Caco-2 (cell line): ENCODE measurements at regions of chr13 and their contacts with region 1.

Region 1: GRCh38 chr13:26946684-26947343 is 186.2 kb upstream of the GPR12 start:
- DNase-seq: peak; percentile 32 to 69
- H3K4me3 ChIP-seq: no peak overlapping the region
- H3K4me3 Mint-ChIP-seq: no peak overlapping the region
- H3K27ac Mint-ChIP-seq: no peak overlapping the region
- H3K4me1 ChIP-seq: peaks cover 48% of the 10 kb centered on the region
- H3K4me1 Mint-ChIP-seq: peaks cover 34% of the 10 kb centered on the region
- H3K27me3 ChIP-seq: no peaks in the 10 kb centered on the region
- H3K27me3 Mint-ChIP-seq: no peaks in the 10 kb centered on the region
- CTCF ChIP-seq: peak; percentile 87 to 97

Region 2: DNA sequence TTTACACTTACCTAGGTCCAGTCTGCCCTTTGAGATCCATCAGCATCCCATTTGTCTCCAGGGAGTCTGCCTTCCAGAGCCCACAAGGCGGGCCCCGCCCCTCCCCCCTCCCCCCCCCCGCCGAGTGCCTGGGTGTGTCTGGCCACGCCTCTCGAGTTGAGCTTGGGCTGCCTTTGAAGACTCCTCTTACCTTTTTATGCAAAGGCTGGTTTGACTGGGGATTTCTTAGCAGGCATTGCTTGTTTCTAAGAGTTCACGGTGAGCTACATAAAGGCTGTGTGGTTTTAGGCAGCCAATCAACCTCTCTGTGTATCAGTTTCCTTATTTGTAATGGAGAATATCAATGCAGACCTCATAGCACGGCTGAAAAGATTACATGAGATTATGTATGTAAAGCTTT is 197.5 kb before region 1 on chr13:
- CTCF ChIA-PET with region 1: no interaction called
- POLR2A ChIA-PET with region 1: no interaction called
- intact Hi-C with region 1: no loop called
- DNase-seq: no peak
- H3K4me3 ChIP-seq: no peak overlapping the region
- H3K4me3 Mint-ChIP-seq: no peak overlapping the region
- H3K27ac Mint-ChIP-seq: no peak overlapping the region
- H3K4me1 ChIP-seq: no peaks in the 10 kb centered on the region
- H3K4me1 Mint-ChIP-seq: no peaks in the 10 kb centered on the region
- H3K27me3 ChIP-seq: no peaks in the 10 kb centered on the region; the same call in 1 of the 2 replicates
- H3K27me3 Mint-ChIP-seq: peaks cover 20% of the 10 kb centered on the region
- CTCF ChIP-seq: no peak

Region 3: DNA sequence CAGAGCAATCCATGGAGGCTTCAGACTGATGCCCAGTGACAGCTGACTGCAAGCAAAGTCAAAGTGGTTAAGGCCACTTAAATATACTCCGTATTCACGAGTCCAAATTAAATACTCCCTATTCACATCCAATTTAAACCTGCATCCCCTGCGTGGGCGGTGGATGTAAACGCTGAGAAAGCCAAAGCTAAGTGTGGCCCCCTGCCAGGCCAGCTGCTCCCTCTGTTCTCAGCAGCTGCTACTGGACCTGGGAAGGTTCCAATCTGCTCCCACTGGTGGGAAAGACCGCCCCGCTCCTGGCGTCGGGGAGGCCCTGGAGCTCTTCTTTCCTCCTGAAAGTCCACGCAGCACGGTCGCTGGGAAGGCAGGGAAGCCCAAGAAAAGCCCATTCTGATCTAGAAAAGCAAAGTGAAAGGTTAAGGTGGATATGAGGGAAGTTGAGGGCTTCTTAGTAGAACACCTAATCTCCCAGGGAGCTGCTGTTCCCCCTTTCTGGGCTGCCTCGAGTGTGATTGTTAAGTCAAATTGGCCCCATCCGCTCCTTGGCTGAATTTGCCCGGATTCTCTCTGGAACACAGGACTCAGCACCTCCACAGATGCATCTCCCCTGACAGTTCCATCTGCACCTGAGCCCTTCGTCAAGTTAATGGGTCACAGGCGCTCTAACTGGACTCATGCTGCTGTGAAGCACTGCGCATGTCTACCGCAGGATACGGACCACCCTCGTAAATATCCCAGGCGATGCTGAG is 19.3 kb after region 1 on chr13:
- CTCF ChIA-PET with region 1: interaction called, 20 read pairs
- POLR2A ChIA-PET with region 1: interaction called, 13 read pairs
- intact Hi-C with region 1: loop called (anchors 1 kb)
- DNase-seq: no peak
- H3K4me3 ChIP-seq: no peak overlapping the region
- H3K4me3 Mint-ChIP-seq: no peak overlapping the region
- H3K27ac Mint-ChIP-seq: peak overlapping the region; percentile 92
- H3K4me1 ChIP-seq: peaks cover 84% of the 10 kb centered on the region
- H3K4me1 Mint-ChIP-seq: peaks cover 78% of the 10 kb centered on the region
- H3K27me3 ChIP-seq: no peaks in the 10 kb centered on the region
- H3K27me3 Mint-ChIP-seq: no peaks in the 10 kb centered on the region
- CTCF ChIP-seq: no peak

Region 4: DNA sequence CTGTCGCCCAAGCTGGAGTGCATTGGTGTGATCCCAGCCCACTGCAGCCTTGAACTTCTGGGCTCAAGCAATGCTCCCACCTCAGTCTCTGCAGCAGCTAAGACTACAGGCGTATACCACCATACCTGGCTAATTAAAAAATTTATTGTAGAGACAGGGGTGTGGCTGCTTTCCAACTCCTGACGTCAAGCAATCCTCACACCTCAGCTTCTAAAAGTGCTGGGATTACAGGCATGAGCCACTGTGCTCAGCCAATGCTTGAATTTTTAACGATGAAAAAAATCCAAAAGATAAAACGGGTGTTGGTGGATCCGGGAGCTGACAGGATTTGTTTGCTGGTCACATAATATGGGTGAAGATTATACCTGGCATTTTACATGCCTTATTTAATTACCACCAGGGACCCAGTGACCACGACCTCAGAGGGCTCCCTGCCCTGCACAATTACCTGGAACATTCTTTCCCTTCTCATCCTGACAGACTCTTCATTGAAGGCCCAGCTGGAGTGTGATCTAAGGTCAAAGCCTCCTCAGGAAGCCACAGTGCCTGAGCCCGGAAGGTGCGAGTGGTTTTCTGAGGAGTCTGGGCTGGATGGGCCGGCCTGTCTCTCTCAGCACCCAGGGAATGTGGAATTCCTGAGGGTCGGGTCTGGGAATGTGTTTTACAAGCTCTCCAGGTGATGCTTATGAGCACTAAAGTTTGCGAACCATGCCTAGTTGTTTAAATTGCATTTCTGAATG is 31.4 kb after region 1 on chr13:
- CTCF ChIA-PET with region 1: interaction called, 72 read pairs
- POLR2A ChIA-PET with region 1: interaction called, 24 read pairs
- intact Hi-C with region 1: loop called (anchors 1 kb)
- DNase-seq: peak; percentile 84 to 94
- H3K4me3 ChIP-seq: no peak overlapping the region
- H3K4me3 Mint-ChIP-seq: peak overlapping the region; percentile 12
- H3K27ac Mint-ChIP-seq: peak overlapping the region; percentile 80
- H3K4me1 ChIP-seq: peaks cover 77% of the 10 kb centered on the region
- H3K4me1 Mint-ChIP-seq: peaks cover 69% of the 10 kb centered on the region
- H3K27me3 ChIP-seq: no peaks in the 10 kb centered on the region
- H3K27me3 Mint-ChIP-seq: no peaks in the 10 kb centered on the region
- CTCF ChIP-seq: no peak

Region 5: DNA sequence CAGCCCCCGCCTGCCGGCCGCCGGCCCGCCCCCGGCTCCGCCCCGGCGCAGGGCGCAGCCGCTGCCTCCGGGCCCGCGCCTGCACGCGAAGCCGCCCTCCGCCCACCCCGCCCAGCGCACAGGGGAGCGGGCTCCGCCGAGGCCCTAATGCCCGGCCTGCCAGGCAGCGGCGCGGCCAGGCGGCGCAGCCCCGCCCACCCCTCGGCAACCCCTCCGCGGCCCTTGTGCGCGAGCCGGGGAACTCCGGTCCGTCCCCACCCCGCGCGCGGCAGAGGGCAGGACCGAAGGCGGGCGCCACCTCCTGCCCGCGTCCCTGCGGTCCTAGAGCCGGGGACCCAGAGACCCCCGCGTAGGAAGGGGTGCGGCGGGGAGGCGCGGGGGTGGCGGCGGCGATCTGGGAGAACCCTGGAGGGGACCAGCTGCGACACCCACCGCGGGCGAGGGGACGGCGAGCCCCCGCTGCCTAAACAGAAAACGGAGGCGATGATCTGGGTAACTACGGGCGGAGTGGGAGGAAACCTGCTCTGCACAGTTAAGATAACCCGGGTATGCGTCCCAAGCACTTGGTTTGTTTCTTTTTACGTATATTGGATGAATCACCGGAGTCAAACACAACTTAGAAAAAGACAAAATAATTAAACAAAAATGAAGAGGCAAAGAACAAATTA is 225.1 kb after region 1 on chr13:
- CTCF ChIA-PET with region 1: no interaction called
- POLR2A ChIA-PET with region 1: no interaction called
- intact Hi-C with region 1: loop called (anchors 5 kb)
- DNase-seq: peak; percentile 93 to 95
- H3K4me3 ChIP-seq: peak overlapping the region; percentile 85
- H3K4me3 Mint-ChIP-seq: peak overlapping the region; percentile 95
- H3K27ac Mint-ChIP-seq: no peak overlapping the region
- H3K4me1 ChIP-seq: peaks cover 19% of the 10 kb centered on the region
- H3K4me1 Mint-ChIP-seq: peaks cover 27% of the 10 kb centered on the region
- H3K27me3 ChIP-seq: no peaks in the 10 kb centered on the region
- H3K27me3 Mint-ChIP-seq: no peaks in the 10 kb centered on the region
- CTCF ChIP-seq: no peak

Region 6: GRCh38 chr13:27270594-27271520 is 324.0 kb after region 1 on chr13 and contains the start of gene RASL11A:
- CTCF ChIA-PET with region 1: interaction called, 12 read pairs
- POLR2A ChIA-PET with region 1: interaction called, 4 read pairs
- intact Hi-C with region 1: loop called (anchors 5 kb)
- DNase-seq: peak; percentile 87 to 91
- H3K4me3 ChIP-seq: peak within 1 kb of the TSS; percentile 82
- H3K4me3 Mint-ChIP-seq: peak within 1 kb of the TSS; percentile 81
- H3K27ac Mint-ChIP-seq: peak within 1 kb of the TSS; percentile 74
- H3K4me1 ChIP-seq: peaks cover 4% of the 10 kb centered on the region; the same call in 1 of the 2 replicates
- H3K4me1 Mint-ChIP-seq: peaks cover 7% of the 10 kb centered on the region
- H3K27me3 ChIP-seq: no peaks in the 10 kb centered on the region
- H3K27me3 Mint-ChIP-seq: no peaks in the 10 kb centered on the region
- CTCF ChIP-seq: peak; percentile 79 to 97
- total RNA-seq, gene RASL11A: 18.8 and 21.0 TPM in 2 replicates

Region 7: GRCh38 chr13:27353166-27353583 is 406.4 kb after region 1 on chr13:
- CTCF ChIA-PET with region 1: interaction called, 128 read pairs
- POLR2A ChIA-PET with region 1: interaction called, 3 read pairs
- intact Hi-C with region 1: no loop called
- DNase-seq: no peak
- H3K4me3 ChIP-seq: no peak overlapping the region
- H3K4me3 Mint-ChIP-seq: no peak overlapping the region
- H3K27ac Mint-ChIP-seq: peak overlapping the region; percentile 22
- H3K4me1 ChIP-seq: peaks cover 16% of the 10 kb centered on the region
- H3K4me1 Mint-ChIP-seq: peaks cover 6% of the 10 kb centered on the region
- H3K27me3 ChIP-seq: no peaks in the 10 kb centered on the region
- H3K27me3 Mint-ChIP-seq: no peaks in the 10 kb centered on the region
- CTCF ChIP-seq: no peak

Region 8: DNA sequence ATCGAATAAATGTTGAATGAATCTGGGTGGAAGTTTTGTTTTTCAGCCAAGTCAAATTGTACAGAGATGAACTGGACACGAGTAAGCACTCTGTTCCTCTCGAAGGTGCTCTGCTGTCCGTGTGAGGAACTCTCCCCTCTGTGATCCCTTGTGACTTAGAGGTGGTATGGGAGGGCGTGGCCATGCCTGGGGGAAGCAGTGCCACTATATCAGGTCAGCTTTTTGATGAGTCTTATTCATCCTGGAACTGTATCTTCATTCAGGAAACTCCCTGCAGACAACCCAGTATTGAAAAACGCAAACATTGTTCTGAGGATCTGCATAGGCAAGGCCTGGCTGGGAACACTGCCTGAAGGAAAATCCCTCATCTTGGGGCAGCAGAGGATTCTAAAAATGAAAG is 1593.8 kb after region 1 on chr13:
- CTCF ChIA-PET with region 1: no interaction called
- POLR2A ChIA-PET with region 1: no interaction called
- intact Hi-C with region 1: loop called (anchors 10 kb)
- DNase-seq: no peak
- H3K4me3 ChIP-seq: no peak overlapping the region
- H3K4me3 Mint-ChIP-seq: no peak overlapping the region
- H3K27ac Mint-ChIP-seq: no peak overlapping the region
- H3K4me1 ChIP-seq: peaks cover 14% of the 10 kb centered on the region
- H3K4me1 Mint-ChIP-seq: peaks cover 26% of the 10 kb centered on the region
- H3K27me3 ChIP-seq: no peaks in the 10 kb centered on the region
- H3K27me3 Mint-ChIP-seq: no peaks in the 10 kb centered on the region
- CTCF ChIP-seq: no peak